Dorsolateral prefrontal cortex (tissue), 120 donors: ENCODE measurements at regions of chr9 and their contacts with region 1.

Region 1: DNA sequence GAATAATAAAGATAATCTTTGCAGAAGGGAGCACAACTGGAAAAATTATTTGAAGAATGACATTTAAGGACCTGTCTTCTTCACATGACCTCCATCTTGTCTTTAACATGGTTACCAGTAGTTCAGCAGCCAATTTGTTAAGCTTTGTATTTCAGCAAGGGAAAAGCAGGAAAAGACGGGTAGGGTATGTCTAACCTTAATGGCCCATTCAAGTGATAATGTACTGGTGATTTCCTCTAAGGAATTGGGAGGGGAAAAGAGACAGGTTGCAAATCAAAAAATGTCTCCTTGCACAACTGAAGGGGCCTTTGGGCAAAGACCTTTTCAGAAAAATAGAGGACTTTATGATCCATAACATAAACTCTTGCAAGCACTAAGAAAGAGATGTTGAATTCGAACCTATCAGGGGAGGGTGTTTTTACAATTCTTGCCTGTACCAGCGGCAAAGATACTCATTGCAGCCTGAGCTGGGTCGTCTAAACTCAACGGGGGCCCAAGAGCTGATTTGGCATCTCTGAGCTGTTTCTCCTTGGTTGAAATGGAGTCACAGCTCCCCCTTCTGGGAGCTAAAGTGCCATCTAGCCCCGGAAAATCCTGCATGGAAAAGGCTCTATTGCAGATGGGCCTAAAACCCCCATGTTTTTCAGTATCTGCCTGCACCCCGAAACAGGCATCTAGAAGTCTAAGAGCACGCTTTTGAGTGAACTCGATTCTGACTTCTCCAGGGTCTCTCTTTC is 3.8 kb downstream of the BRINP1 start:
- DNase-seq: peak in 8 of 10 donors; percentile 54 to 81 (median 63)
- H3K4me3 ChIP-seq: peak overlapping the region in 51 of 59 donors; percentile 1 to 89 (median 40)
- H3K27ac ChIP-seq: peak overlapping the region in 33 of 59 donors; percentile 1 to 83 (median 45)
- H3K27me3 ChIP-seq: peaks cover 0 to 29% (median 8%) of the 10 kb centered on the region in 45 donors
- CTCF ChIP-seq: peak; percentile 34 to 82 (median 70)

Region 2: GRCh38 chr9:118595719-118596305 is 769.6 kb before region 1 on chr9:
- intact Hi-C with region 1: loop called (anchors 5 to 10 kb)
- DNase-seq: peak in 9 of 10 donors; percentile 40 to 72 (median 53)
- H3K4me3 ChIP-seq: no peak overlapping the region
- H3K27ac ChIP-seq: no peak overlapping the region
- H3K27me3 ChIP-seq: no peaks in the 10 kb centered on the region
- CTCF ChIP-seq: peak in 55 of 56 donors; percentile 22 to 73 (median 58)

Region 3: GRCh38 chr9:119284118-119284517 is 81.3 kb before region 1 on chr9:
- intact Hi-C with region 1: loop called (anchors 5 kb)
- DNase-seq: peak in 7 of 10 donors; percentile 35 to 74 (median 59)
- H3K4me3 ChIP-seq: no peak overlapping the region
- H3K27ac ChIP-seq: peak overlapping the region in 50 of 59 donors; percentile 3 to 85 (median 67)
- H3K27me3 ChIP-seq: no peaks in the 10 kb centered on the region
- CTCF ChIP-seq: peak in 54 of 56 donors; percentile 34 to 72 (median 53)

Region 4: DNA sequence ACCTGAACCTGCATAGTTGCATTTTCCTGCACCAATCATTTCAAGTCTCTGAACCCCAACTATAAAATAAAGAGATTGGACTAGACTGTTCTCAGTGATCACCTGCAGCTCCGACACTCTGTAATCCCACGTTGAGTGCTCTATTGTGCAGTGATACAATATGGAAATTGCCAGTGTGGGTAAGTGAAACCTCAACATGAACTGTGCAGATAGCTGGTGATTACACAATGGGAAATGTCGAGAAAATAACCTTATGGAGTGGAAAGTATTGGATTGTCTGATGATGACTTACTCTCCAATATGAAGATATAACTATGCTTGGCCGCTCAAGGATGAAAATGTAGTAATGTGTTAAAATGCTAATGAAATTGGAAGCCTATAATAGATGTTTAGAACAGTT is 296.9 kb after region 1 on chr9:
- intact Hi-C with region 1: no loop called
- DNase-seq: no peak
- H3K4me3 ChIP-seq: no peak overlapping the region
- H3K27ac ChIP-seq: no peak overlapping the region
- H3K27me3 ChIP-seq: no peaks in the 10 kb centered on the region
- CTCF ChIP-seq: no peak